Stomach (tissue), 19 donors: ENCODE measurements at regions of chr1 and their contacts with region 1.

Region 1: GRCh38 chr1:9494929-9495758 is 44.1 kb upstream of the SLC25A33 start:
- DNase-seq: peak; percentile 71 to 84
- H3K4me3 ChIP-seq: peak overlapping the region; percentile 24 to 34 (median 30)
- H3K27ac ChIP-seq: no peak overlapping the region
- H3K4me1 ChIP-seq: peaks cover 6 to 18% (median 9%) of the 10 kb centered on the region in 4 donors
- H3K27me3 ChIP-seq: peaks cover 0 to 12% (median 4%) of the 10 kb centered on the region in 3 donors
- CTCF ChIP-seq: peak in 6 of 7 experiments; percentile 56 to 99 (median 94)
- EP300 ChIP-seq: no peak
- POLR2A ChIP-seq: no peak

Region 2: DNA sequence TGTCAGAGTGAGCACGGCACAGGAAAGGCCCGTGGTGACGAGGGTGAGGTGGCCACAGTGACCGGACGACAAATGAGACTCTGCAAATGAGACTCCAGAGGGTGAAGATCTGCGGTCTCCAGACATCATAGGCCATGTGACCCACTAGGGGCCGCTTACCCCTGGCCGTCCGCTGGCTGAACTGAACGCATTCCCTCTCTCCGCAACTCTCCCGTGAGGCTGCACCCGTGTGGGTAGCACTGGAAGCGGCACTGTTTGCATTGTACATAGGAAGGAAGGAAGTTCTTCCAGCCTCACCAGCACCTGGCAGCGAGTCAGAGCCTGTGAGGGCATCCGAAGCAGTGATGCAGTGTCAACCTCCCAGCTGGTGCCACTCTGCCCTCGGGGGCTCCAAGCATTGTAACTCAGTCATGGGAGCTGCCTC is 226.1 kb before region 1 on chr1:
- intact Hi-C with region 1: loop called (anchors 5 kb)
- DNase-seq: no peak
- H3K4me3 ChIP-seq: no peak overlapping the region
- H3K27ac ChIP-seq: no peak overlapping the region
- H3K4me1 ChIP-seq: peaks cover 8 to 17% (median 13%) of the 10 kb centered on the region in 4 donors
- H3K27me3 ChIP-seq: no peaks in the 10 kb centered on the region
- CTCF ChIP-seq: no peak
- EP300 ChIP-seq: no peak
- POLR2A ChIP-seq: no peak

Region 3: GRCh38 chr1:9289090-9289534 is 206.0 kb before region 1 on chr1:
- intact Hi-C with region 1: loop called (anchors 5 kb)
- DNase-seq: peak; percentile 76 to 89
- H3K4me3 ChIP-seq: no peak overlapping the region
- H3K27ac ChIP-seq: peak overlapping the region in 3 of 5 donors; percentile 93 to 98 (median 96)
- H3K4me1 ChIP-seq: peaks cover 15 to 37% (median 24%) of the 10 kb centered on the region in 4 donors
- H3K27me3 ChIP-seq: no peaks in the 10 kb centered on the region
- CTCF ChIP-seq: peak in 5 of 7 experiments; percentile 88 to 97 (median 93)
- EP300 ChIP-seq: no peak
- POLR2A ChIP-seq: no peak

Region 4: DNA sequence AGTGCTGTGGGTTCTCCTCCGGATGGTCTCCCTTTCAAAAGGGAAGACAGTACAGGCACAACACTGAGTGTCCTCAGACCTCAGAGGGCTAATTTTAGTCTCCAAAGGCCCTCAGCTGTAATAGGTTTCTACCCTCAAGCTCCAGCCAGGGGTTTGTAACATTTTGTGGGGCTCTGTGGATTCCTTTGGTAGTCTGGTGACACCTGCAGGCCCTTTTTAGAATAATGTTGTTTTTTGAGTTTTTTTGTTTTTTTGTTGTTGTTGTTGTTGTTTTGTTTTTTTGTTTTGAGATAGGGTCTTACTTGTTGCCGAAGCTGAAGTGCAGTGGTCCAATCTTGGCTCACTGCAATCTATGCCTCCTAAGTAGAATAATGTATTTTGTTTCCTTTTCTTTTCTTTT is 78.6 kb after region 1 on chr1:
- intact Hi-C with region 1: loop called (anchors 5 kb)
- DNase-seq: peak in 1 of 2 donors; percentile 30
- H3K4me3 ChIP-seq: no peak overlapping the region
- H3K27ac ChIP-seq: no peak overlapping the region
- H3K4me1 ChIP-seq: no peaks in the 10 kb centered on the region
- H3K27me3 ChIP-seq: no peaks in the 10 kb centered on the region
- CTCF ChIP-seq: peak in 3 of 7 experiments; percentile 13 to 22 (median 22)
- EP300 ChIP-seq: no peak
- POLR2A ChIP-seq: no peak